ENCODE measurements at regions of chr19 and their contacts with region 1.

Region 1: GRCh38 chr19:57613941-57614743 is at the start of gene ZNF134:
- DNase-seq: peak; percentile 82 to 86
- ATAC-seq: peak; percentile 98 to 99
- H3K4me3 ChIP-seq: peak within 1 kb of the TSS; percentile 79 to 98 (median 90)
- H3K27ac ChIP-seq: peak within 1 kb of the TSS; percentile 72 to 85 (median 80)
- H3K4me1 ChIP-seq: peaks cover 14 to 16% of the 10 kb centered on the region in 2 donors
- H3K27me3 ChIP-seq: peaks cover 0 to 3% (median 0%) of the 10 kb centered on the region in 3 donors
- CTCF ChIP-seq: peak in 3 of 5 experiments; percentile 21 to 41 (median 25)
- POLR2A ChIP-seq: peak in 1 of 2 donors; percentile 36
- total RNA-seq, gene ZNF134: 4.2 to 13.1 (median 8.0) TPM

Region 2: DNA sequence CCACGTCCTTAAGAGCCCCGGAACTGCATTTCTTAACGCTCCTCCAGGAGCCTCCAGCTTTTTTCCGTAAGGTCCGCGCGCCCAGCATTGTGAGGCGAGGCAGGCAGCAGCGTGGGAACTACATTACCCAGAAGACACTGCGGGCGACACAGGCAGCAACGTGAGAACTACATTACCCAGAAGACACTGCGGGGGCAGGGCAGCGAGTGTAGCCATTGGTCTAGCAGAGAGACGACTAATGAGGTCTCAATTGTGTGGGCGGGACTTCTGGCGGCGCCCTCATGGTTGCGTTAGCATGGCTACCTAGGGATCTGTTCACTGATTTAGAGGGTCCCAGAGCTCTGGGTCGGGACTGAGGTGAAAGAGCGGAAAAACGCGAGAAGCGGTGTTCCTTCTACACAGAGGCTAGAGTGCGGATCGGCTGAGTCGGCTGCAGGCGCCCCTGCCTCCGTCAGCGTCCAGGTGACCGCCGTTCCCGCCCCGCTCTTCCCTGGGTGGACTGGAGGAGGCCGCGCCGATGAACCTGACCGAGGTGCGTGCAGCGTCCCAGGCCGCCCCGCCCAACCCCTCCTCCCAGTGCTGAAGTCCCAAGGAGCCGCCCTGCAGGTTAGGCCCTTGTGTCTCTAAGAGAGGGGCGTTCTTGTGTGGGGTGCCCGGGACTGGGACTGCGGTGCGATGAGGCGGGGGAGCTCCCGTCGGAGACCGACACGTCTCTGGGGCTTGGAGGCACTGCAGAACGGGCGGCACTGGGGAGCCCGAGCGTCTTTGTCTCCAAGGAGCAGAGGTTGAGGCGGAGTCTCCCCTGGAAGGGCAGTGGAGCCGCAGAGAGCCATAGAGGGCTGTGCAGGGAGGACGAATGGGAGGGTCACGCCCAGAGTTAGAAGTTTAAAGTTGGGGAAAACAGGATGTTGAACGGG is 178.8 kb before region 1 on chr19 and contains the start of gene ZNF749:
- in situ Hi-C with region 1: no loop called
- intact Hi-C with region 1: loop called (anchors 1 kb)
- DNase-seq: peak; percentile 97 to 99
- ATAC-seq: peak; percentile 100
- H3K4me3 ChIP-seq: peak within 1 kb of the TSS; percentile 87 to 94 (median 90)
- H3K27ac ChIP-seq: peak within 1 kb of the TSS; percentile 70 to 79 (median 75)
- H3K4me1 ChIP-seq: peaks cover 14 to 17% of the 10 kb centered on the region in 2 donors
- H3K27me3 ChIP-seq: no peaks in the 10 kb centered on the region
- CTCF ChIP-seq: no peak
- POLR2A ChIP-seq: no peak
- total RNA-seq, gene ZNF749: 3.1 to 11.4 (median 3.9) TPM

Region 3: DNA sequence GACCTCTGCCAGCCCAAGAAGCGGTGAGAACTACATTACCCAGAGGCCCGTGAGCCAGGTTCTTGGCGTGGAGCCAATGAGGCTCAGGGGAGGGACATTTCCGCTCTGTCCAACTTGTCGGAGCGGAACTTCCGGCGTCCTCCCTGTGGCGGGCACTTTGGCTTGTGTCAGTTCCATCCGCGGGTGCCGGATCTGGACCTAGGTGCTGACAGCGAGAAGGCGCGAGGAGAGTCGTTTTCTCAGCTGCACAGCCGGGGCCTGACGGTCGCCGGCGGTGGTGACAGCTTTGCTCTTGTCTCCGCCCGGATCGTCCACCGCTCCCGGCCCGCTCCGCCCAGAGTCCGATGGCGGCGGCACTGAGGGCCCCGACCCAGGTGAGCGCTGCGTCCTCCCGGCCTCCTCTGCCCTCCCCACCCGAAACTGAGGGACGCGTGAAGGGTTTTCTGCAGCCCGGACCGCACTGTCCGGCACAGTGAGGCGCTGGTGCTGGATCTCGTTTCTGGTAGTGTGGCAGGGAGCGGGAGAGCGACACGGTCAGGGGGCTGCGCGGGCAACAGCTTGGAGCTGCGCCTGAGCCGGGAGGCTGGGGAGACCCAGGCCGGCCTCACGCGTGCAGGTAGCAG is 14.3 kb before region 1 on chr19 and contains the start of gene ZNF530:
- in situ Hi-C with region 1: no loop called
- intact Hi-C with region 1: loop called (anchors 2 kb)
- DNase-seq: peak; percentile 89 to 91
- ATAC-seq: peak; percentile 100
- H3K4me3 ChIP-seq: peak within 1 kb of the TSS; percentile 76 to 98 (median 79)
- H3K27ac ChIP-seq: peak within 1 kb of the TSS; percentile 22 to 70 (median 50)
- H3K4me1 ChIP-seq: peaks cover 7 to 9% of the 10 kb centered on the region in 2 donors
- H3K27me3 ChIP-seq: no peaks in the 10 kb centered on the region
- CTCF ChIP-seq: no peak
- POLR2A ChIP-seq: no peak
- total RNA-seq, gene ZNF530: 0.86 to 4.2 (median 3.4) TPM

Region 4: DNA sequence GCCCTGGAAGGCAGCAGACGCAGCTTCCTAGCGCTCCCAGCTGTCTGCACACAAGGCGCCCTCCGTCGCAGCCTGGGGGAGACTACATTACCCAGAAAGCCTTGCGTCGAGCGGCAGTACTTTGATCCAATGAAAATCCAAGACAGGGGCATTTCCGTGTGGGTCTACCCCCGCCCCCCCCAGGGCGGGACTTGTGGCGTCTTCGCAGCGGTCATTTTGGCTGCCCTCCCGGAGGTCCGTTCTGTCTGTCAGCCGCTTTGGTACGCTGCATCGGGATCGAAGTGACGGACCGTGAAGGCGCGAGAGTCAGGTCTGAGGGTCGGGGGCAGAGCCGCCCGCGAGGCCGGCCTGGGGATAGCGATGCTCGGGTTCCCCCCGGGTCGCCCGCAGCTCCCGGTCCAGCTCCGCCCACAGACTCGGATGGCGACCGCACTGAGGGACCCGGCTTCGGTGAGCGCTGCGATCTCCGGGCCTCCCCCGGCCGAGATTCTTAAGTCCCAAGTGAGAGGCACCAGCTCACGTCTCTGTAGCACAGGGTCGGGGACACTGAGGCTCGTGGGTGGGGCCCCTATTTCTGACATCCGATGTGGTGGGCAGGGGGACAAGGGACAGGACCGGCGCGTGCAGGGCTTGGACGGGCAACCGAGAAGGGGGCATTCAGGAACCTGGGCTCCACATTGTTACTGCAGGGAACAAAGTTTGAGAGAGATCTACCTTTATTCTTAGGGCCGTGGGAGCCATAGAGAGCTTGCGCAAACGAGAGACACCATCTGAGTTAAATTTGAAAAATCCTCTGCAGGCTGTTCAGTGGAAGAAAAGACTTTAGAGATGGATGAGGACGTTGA is 19.1 kb after region 1 on chr19 and contains the start of gene ZNF211:
- in situ Hi-C with region 1: no loop called
- intact Hi-C with region 1: loop called (anchors 1 kb)
- DNase-seq: peak; percentile 82 to 92
- ATAC-seq: peak; percentile 100
- H3K4me3 ChIP-seq: peak within 1 kb of the TSS; percentile 85 to 96 (median 92)
- H3K27ac ChIP-seq: peak within 1 kb of the TSS; percentile 79 to 86 (median 86)
- H3K4me1 ChIP-seq: peaks cover 7 to 13% of the 10 kb centered on the region in 2 donors
- H3K27me3 ChIP-seq: no peaks in the 10 kb centered on the region
- CTCF ChIP-seq: no peak
- POLR2A ChIP-seq: no peak
- total RNA-seq, gene ZNF211: 2.9 to 5.5 (median 4.3) TPM

Region 5: GRCh38 chr19:57682226-57682766 is 68.2 kb after region 1 on chr19:
- in situ Hi-C with region 1: no loop called
- intact Hi-C with region 1: loop called (anchors 1 kb)
- DNase-seq: no peak
- ATAC-seq: peak; percentile 22 to 27
- H3K4me3 ChIP-seq: peak overlapping the region; percentile 74 to 99 (median 88)
- H3K27ac ChIP-seq: peak overlapping the region; percentile 55 to 82 (median 68)
- H3K4me1 ChIP-seq: peaks cover 10 to 14% of the 10 kb centered on the region in 2 donors
- H3K27me3 ChIP-seq: no peaks in the 10 kb centered on the region
- CTCF ChIP-seq: no peak
- POLR2A ChIP-seq: no peak